MCF 10A (cell line): ENCODE measurements at regions of chr19 and their contacts with region 1.

Region 1: GRCh38 chr19:8321060-8321985 is at the starts of genes NDUFA7 and RPS28:
- DNase-seq: peak; percentile 96
- H3K4me3 Mint-ChIP-seq: peak within 1 kb of the TSS; percentile 88
- H3K27ac Mint-ChIP-seq: peak within 1 kb of the TSS; percentile 90
- H3K4me1 Mint-ChIP-seq: peaks cover 7% of the 10 kb centered on the region
- H3K27me3 Mint-ChIP-seq: no peaks in the 10 kb centered on the region
- CTCF ChIP-seq: no peak
- total RNA-seq, gene NDUFA7: 83.2 and 91.8 TPM in 2 replicates
- total RNA-seq, gene RPS28: 2,247 and 2,362 TPM in 2 replicates

Region 2: GRCh38 chr19:8307965-8308866 is 13.1 kb before region 1 on chr19 and contains the start of gene CD320:
- CTCF ChIA-PET with region 1: interaction called, 9 read pairs
- POLR2A ChIA-PET with region 1: interaction called, 30 read pairs
- intact Hi-C with region 1: no loop called
- DNase-seq: peak; percentile 94
- H3K4me3 Mint-ChIP-seq: peak within 1 kb of the TSS; percentile 86
- H3K27ac Mint-ChIP-seq: peak within 1 kb of the TSS; percentile 9
- H3K4me1 Mint-ChIP-seq: peaks cover 15% of the 10 kb centered on the region
- H3K27me3 Mint-ChIP-seq: no peaks in the 10 kb centered on the region
- CTCF ChIP-seq: no peak
- total RNA-seq, gene CD320: 39.2 and 68.8 TPM in 2 replicates

Region 3: DNA sequence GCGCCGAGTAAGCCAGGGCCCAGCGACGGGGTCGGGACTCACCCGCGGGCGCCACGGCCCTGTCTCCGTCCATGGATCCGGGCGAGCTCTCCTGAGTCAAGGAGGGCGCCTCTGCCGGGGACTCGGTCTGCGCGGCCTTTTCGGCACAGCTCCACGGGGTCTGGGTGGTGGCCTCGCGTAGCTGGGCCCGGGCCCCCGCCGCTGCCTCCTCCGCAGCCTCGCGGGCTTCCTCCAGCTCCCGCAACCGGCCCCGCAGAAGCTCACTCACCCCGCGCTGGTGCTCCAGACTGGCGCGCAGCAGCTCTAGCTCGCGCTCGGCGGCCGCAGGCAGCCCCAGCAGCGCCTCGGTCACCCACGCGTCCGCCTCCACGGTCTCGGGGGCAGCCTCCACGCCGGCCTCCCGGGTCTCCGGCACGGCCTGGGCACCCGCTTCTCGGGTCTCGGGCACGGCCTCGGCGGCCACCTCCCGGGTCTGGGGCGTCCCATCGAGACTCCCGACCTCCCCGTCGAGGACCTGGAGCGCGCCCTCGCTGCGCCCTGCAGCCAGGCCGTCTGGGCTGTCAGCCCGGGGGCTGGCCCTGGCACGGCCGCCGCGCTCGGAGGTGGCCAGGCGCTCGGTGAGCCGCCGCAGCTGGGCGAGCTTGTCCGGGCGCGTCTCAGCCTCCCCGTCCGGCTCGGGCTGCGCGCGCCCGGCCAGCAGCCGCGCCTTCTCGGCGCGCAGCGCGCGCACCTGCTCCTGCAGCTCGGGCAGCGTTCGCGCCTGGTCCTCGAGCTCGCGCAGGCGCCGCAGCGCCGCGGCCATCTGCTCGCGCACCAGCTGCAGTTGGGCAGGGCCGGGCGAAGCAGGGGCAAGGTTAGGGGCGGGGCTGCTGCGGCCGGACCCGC is 13.4 kb after region 1 on chr19:
- CTCF ChIA-PET with region 1: interaction called, 11 read pairs
- POLR2A ChIA-PET with region 1: interaction called, 70 read pairs
- intact Hi-C with region 1: no loop called
- DNase-seq: peak; percentile 71
- H3K4me3 Mint-ChIP-seq: peak overlapping the region; percentile 50
- H3K27ac Mint-ChIP-seq: no peak overlapping the region
- H3K4me1 Mint-ChIP-seq: no peaks in the 10 kb centered on the region
- H3K27me3 Mint-ChIP-seq: no peaks in the 10 kb centered on the region
- CTCF ChIP-seq: no peak

Region 4: DNA sequence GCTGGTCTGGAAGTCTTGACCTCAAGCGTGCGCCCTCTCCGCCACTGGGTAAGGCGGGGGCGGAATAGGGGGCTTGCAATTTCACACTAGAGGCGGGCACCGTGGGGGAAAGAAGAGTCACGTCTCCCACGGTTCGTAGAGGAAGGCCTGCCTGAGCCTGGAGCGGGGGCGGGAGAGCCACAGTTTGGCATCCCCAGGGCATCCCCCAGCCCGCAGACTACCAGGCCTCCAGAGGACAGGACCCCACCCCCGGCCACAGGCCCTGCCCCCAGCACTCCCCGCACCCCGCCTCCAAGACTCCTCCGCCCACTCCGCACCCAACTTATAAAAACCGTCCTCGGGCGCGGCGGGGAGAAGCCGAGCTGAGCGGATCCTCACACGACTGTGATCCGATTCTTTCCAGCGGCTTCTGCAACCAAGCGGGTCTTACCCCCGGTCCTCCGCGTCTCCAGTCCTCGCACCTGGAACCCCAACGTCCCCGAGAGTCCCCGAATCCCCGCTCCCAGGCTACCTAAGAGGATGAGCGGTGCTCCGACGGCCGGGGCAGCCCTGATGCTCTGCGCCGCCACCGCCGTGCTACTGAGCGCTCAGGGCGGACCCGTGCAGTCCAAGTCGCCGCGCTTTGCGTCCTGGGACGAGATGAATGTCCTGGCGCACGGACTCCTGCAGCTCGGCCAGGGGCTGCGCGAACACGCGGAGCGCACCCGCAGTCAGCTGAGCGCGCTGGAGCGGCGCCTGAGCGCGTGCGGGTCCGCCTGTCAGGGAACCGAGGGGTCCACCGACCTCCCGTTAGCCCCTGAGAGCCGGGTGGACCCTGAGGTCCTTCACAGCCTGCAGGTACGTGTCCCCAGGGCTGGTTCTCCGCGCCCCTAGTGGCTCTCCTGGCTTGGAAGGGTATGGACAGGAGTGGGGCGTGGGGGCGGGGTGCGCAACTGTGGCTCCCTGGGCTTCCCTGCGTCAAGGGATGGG is 42.8 kb after region 1 on chr19 and contains the start of gene ANGPTL4:
- CTCF ChIA-PET with region 1: no interaction called
- POLR2A ChIA-PET with region 1: interaction called, 11 read pairs
- intact Hi-C with region 1: no loop called
- DNase-seq: peak; percentile 89
- H3K4me3 Mint-ChIP-seq: peak within 1 kb of the TSS; percentile 73
- H3K27ac Mint-ChIP-seq: peak within 1 kb of the TSS; percentile 94
- H3K4me1 Mint-ChIP-seq: peaks cover 34% of the 10 kb centered on the region
- H3K27me3 Mint-ChIP-seq: no peaks in the 10 kb centered on the region
- CTCF ChIP-seq: no peak
- total RNA-seq, gene ANGPTL4: 12.6 and 32.8 TPM in 2 replicates

Region 5: GRCh38 chr19:8513687-8514504 is 192.6 kb after region 1 on chr19 and contains the start of gene ZNF414:
- CTCF ChIA-PET with region 1: no interaction called
- POLR2A ChIA-PET with region 1: interaction called, 12 read pairs
- intact Hi-C with region 1: no loop called
- DNase-seq: peak; percentile 98
- H3K4me3 Mint-ChIP-seq: peak within 1 kb of the TSS; percentile 85
- H3K27ac Mint-ChIP-seq: peak within 1 kb of the TSS; percentile 99
- H3K4me1 Mint-ChIP-seq: peaks cover 15% of the 10 kb centered on the region
- H3K27me3 Mint-ChIP-seq: no peaks in the 10 kb centered on the region
- CTCF ChIP-seq: no peak
- total RNA-seq, gene ZNF414: 16.3 and 27.2 TPM in 2 replicates